B cell (primary cell): ENCODE measurements at regions of chr14 and their contacts with region 1.

Region 1: GRCh38 chr14:106872611-106873446 is 1346.4 kb downstream of the TMEM121 start:
- DNase-seq: peak; percentile 87
- ATAC-seq: peak; percentile 81
- H3K4me3 ChIP-seq: peak overlapping the region in 4 of 5 experiments; percentile 30 to 47 (median 41)
- H3K4me3 Mint-ChIP-seq: peak overlapping the region; percentile 70
- H3K27ac ChIP-seq: no peak overlapping the region
- H3K27ac Mint-ChIP-seq: peak overlapping the region; percentile 68
- H3K4me1 ChIP-seq: peaks cover 22 to 38% of the 10 kb centered on the region in 2 donors
- H3K4me1 Mint-ChIP-seq: peaks cover 38% of the 10 kb centered on the region
- H3K27me3 ChIP-seq: peaks cover 0 to 10% (median 4%) of the 10 kb centered on the region in 4 experiments
- H3K27me3 Mint-ChIP-seq: peaks cover 19% of the 10 kb centered on the region
- CTCF ChIP-seq: peak; percentile 88

Region 2: DNA sequence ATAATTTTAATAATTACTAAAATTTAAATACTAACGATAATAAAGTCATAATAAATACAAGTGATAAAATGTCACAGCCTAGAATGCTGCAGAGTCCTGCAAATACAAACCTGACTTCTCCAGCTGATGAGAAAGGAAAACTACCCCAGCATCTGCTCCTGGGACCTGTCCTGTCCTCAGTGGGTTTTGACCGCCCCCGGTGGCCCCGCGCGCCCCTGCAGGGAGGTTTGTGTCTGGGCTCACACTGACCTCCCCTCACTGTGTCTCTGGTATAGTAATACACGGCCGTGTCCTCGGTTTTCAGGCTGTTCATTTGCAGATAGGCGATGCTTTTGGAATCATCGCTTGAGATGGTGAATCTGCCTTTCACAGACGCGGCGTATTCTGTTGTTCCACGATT is 207.0 kb before region 1 on chr14:
- CTCF ChIA-PET with region 1: interaction called, 31 read pairs
- POLR2A ChIA-PET with region 1: no interaction called
- intact Hi-C with region 1: no loop called
- DNase-seq: no peak
- ATAC-seq: no peak
- H3K4me3 ChIP-seq: no peak overlapping the region
- H3K4me3 Mint-ChIP-seq: no peak overlapping the region
- H3K27ac ChIP-seq: no peak overlapping the region
- H3K27ac Mint-ChIP-seq: no peak overlapping the region
- H3K4me1 ChIP-seq: peaks cover 9 to 10% of the 10 kb centered on the region in 2 donors
- H3K4me1 Mint-ChIP-seq: peaks cover 21% of the 10 kb centered on the region
- H3K27me3 ChIP-seq: peaks cover 0 to 6% (median 2%) of the 10 kb centered on the region in 4 experiments
- H3K27me3 Mint-ChIP-seq: peaks cover 10% of the 10 kb centered on the region
- CTCF ChIP-seq: no peak

Region 3: GRCh38 chr14:106790189-106791036 is 82.4 kb before region 1 on chr14:
- CTCF ChIA-PET with region 1: interaction called, 94 read pairs
- POLR2A ChIA-PET with region 1: no interaction called
- intact Hi-C with region 1: loop called (anchors 1 kb)
- DNase-seq: peak; percentile 80
- ATAC-seq: peak; percentile 90
- H3K4me3 ChIP-seq: no peak overlapping the region
- H3K4me3 Mint-ChIP-seq: no peak overlapping the region
- H3K27ac ChIP-seq: no peak overlapping the region
- H3K27ac Mint-ChIP-seq: no peak overlapping the region
- H3K4me1 ChIP-seq: peaks cover 5 to 6% of the 10 kb centered on the region in 2 donors
- H3K4me1 Mint-ChIP-seq: peaks cover 10% of the 10 kb centered on the region
- H3K27me3 ChIP-seq: no peaks in the 10 kb centered on the region
- H3K27me3 Mint-ChIP-seq: peaks cover 3% of the 10 kb centered on the region
- CTCF ChIP-seq: peak; percentile 94

Region 4: DNA sequence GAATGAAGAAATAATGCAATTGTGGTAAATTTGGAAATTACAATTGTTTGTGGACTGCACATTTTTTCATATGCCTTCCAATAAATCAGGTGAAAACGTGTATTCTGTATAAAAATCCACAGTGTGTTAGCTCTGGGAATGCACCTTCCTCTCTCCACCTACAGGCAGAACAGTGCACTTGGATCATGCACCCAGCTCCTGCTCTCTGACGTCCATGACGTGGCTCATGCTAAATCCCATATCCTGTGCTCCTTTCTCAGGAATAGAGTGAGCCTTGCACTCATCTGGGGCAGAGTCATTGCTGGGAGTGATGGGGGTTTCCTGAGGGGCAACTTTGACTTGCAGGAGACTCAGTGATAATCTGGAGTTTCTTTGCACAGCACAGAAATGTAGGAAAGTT is 64.4 kb before region 1 on chr14:
- CTCF ChIA-PET with region 1: interaction called, 11 read pairs
- POLR2A ChIA-PET with region 1: no interaction called
- intact Hi-C with region 1: no loop called
- DNase-seq: no peak
- ATAC-seq: no peak
- H3K4me3 ChIP-seq: no peak overlapping the region
- H3K4me3 Mint-ChIP-seq: no peak overlapping the region
- H3K27ac ChIP-seq: no peak overlapping the region
- H3K27ac Mint-ChIP-seq: no peak overlapping the region
- H3K4me1 ChIP-seq: peaks cover 7 to 9% of the 10 kb centered on the region in 2 donors
- H3K4me1 Mint-ChIP-seq: peaks cover 11% of the 10 kb centered on the region
- H3K27me3 ChIP-seq: peaks cover 0 to 3% (median 0%) of the 10 kb centered on the region in 4 experiments
- H3K27me3 Mint-ChIP-seq: peaks cover 16% of the 10 kb centered on the region
- CTCF ChIP-seq: no peak

Region 5: DNA sequence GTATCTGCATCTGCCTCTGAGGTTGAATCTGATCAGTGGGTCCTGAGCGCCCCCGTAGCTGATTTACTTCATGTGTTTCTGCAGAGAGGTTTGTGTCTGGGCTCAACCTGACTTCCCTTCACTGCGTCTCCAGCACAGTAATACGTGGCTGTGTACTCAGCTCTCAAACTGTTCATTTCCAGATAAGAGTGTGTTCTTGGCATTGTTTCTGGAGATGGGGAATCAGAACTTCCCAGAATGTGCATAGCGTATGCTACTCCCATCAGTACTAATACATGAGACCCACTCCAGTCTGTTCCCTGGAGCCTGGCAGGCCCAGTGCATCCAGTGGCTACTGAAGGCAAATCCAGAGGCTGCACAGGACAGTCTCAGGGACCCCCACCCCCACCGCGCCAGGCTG is 49.3 kb before region 1 on chr14:
- CTCF ChIA-PET with region 1: interaction called, 13 read pairs
- POLR2A ChIA-PET with region 1: no interaction called
- intact Hi-C with region 1: no loop called
- DNase-seq: no peak
- ATAC-seq: no peak
- H3K4me3 ChIP-seq: no peak overlapping the region
- H3K4me3 Mint-ChIP-seq: no peak overlapping the region
- H3K27ac ChIP-seq: no peak overlapping the region
- H3K27ac Mint-ChIP-seq: no peak overlapping the region
- H3K4me1 ChIP-seq: no peaks in the 10 kb centered on the region
- H3K4me1 Mint-ChIP-seq: peaks cover 6% of the 10 kb centered on the region
- H3K27me3 ChIP-seq: no peaks in the 10 kb centered on the region
- H3K27me3 Mint-ChIP-seq: no peaks in the 10 kb centered on the region
- CTCF ChIP-seq: no peak

Region 6: DNA sequence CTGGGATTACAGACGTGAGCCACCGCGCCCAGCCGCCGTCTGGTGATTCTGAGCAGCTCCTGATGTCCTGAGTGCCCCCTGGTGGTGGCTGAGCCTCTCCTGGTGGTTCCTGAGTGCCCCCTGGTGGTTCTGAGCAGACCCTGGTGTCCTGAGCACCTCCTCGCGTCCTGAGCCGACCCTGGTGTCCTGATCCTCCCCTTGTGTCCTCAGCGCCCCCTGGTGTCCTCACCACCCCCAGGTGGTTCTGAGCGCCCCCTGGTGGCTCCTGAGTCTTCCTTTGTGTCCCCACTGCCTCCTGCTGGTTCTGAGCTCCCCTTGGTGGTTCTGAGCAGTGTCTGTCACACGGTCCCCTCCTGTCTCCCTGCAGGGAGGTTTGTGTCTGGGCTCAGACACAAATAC is 41.5 kb before region 1 on chr14:
- CTCF ChIA-PET with region 1: interaction called, 339 read pairs
- POLR2A ChIA-PET with region 1: interaction called, 3 read pairs
- intact Hi-C with region 1: no loop called
- DNase-seq: peak; percentile 78
- ATAC-seq: peak; percentile 54
- H3K4me3 ChIP-seq: no peak overlapping the region
- H3K4me3 Mint-ChIP-seq: no peak overlapping the region
- H3K27ac ChIP-seq: no peak overlapping the region
- H3K27ac Mint-ChIP-seq: no peak overlapping the region
- H3K4me1 ChIP-seq: no peaks in the 10 kb centered on the region
- H3K4me1 Mint-ChIP-seq: peaks cover 12% of the 10 kb centered on the region
- H3K27me3 ChIP-seq: no peaks in the 10 kb centered on the region
- H3K27me3 Mint-ChIP-seq: no peaks in the 10 kb centered on the region
- CTCF ChIP-seq: peak; percentile 58

Region 7: GRCh38 chr14:106844608-106845285 is 28.1 kb before region 1 on chr14:
- CTCF ChIA-PET with region 1: interaction called, 339 read pairs
- POLR2A ChIA-PET with region 1: interaction called, 11 read pairs
- intact Hi-C with region 1: loop called (anchors 1 kb)
- DNase-seq: peak; percentile 86
- ATAC-seq: peak; percentile 73
- H3K4me3 ChIP-seq: peak overlapping the region; percentile 65 to 99 (median 97)
- H3K4me3 Mint-ChIP-seq: peak overlapping the region; percentile 97
- H3K27ac ChIP-seq: peak overlapping the region; percentile 63 to 95
- H3K27ac Mint-ChIP-seq: peak overlapping the region; percentile 83
- H3K4me1 ChIP-seq: peaks cover 49 to 54% of the 10 kb centered on the region in 2 donors
- H3K4me1 Mint-ChIP-seq: peaks cover 66% of the 10 kb centered on the region
- H3K27me3 ChIP-seq: no peaks in the 10 kb centered on the region
- H3K27me3 Mint-ChIP-seq: no peaks in the 10 kb centered on the region
- CTCF ChIP-seq: no peak